CD4-positive, alpha-beta T cell (primary cell): ENCODE measurements at regions of chr6 and their contacts with region 1.

Region 1: DNA sequence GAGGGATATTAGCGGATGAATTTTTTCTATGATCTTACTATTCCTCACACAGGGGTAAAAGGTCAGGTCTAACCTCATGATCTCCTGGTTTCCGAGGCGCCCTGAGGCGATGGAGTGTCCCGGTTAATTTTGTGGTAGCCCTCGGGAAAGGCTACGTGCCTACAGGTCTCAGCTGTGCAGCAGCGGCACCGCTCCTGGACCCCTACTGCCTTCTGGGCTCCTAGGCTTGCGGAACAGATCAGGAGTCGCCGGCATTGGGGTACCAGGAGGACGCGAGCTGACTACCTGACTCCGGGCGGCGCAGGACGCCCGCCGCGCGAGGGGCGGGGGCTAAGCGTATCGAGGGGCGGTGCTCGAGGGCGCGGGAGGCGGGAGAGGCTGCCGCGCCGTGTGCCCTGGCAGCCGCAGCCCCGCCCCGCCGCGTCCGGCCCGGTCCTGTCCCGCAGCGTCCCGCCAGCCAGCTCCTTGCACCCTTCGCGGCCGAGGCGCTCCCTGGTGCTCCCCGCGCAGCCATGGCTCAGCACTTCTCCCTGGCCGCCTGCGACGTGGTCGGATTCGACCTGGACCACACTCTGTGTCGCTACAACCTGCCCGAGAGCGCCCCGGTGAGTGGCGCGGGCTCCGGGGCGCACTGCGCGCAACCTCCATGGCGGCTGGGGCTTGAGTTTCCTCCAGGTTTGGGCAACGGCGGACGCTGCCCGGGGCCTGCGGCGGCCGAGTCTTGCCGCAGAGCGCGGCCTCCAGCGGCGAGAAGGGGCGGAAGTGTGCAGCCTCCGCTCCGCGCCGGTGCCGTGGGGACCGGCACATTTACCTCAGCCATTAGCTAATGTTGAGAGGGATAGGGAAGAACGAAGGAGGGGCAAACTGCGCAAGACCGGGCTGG is at the start of gene NT5DC1:
- DNase-seq: peak; percentile 65 to 92 (median 82)
- ATAC-seq: peak; percentile 92
- H3K4me3 ChIP-seq: peak within 1 kb of the TSS; percentile 67
- H3K4me3 Mint-ChIP-seq: peak within 1 kb of the TSS; percentile 99
- H3K27ac ChIP-seq: peak within 1 kb of the TSS; percentile 69 to 75
- H3K27ac Mint-ChIP-seq: peak within 1 kb of the TSS; percentile 80
- H3K4me1 ChIP-seq: peaks cover 26% of the 10 kb centered on the region
- H3K4me1 Mint-ChIP-seq: peaks cover 58% of the 10 kb centered on the region
- H3K27me3 ChIP-seq: no peaks in the 10 kb centered on the region
- H3K27me3 Mint-ChIP-seq: no peaks in the 10 kb centered on the region
- CTCF ChIP-seq: peak; percentile 52
- total RNA-seq, gene NT5DC1: 24.2 to 27.2 TPM

Region 2: DNA sequence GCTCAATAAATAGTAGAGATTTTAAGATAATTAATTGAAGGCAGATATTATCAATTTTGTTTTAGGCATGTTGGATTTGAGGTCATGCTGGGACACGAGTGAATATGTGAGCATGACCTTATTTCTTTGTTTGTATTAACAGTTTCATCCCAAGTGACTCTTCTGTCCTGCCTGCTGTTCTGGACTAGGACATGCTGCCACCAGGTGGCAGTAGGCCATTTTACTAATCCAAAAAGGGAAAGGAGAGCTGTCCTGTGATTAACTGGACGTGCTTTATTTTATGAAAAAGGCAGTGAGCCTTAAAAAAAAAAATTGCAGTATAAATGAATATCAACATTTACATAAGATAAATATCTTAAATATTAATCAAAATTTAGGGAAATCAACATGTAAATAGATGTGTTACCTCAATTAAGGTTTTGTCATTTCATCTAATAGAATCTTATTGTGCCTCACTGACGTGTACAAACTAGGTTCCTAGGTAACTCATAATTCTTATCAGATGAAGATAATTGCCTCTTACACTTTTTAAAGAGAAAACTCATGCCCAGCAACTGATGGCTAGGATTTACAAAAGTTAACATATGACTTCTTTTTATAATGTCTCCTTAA is 89.8 kb before region 1 on chr6:
- CTCF ChIA-PET with region 1: interaction called, 8 read pairs
- POLR2A ChIA-PET with region 1: no interaction called
- intact Hi-C with region 1: loop called (anchors 1 kb)
- DNase-seq: peak; percentile 5 to 62 (median 29)
- ATAC-seq: no peak
- H3K4me3 ChIP-seq: no peak overlapping the region
- H3K4me3 Mint-ChIP-seq: no peak overlapping the region
- H3K27ac ChIP-seq: no peak overlapping the region
- H3K27ac Mint-ChIP-seq: no peak overlapping the region
- H3K4me1 ChIP-seq: no peaks in the 10 kb centered on the region
- H3K4me1 Mint-ChIP-seq: no peaks in the 10 kb centered on the region
- H3K27me3 ChIP-seq: peaks cover 3 to 9% of the 10 kb centered on the region in 2 experiments
- H3K27me3 Mint-ChIP-seq: peaks cover 7% of the 10 kb centered on the region
- CTCF ChIP-seq: peak; percentile 86

Region 3: DNA sequence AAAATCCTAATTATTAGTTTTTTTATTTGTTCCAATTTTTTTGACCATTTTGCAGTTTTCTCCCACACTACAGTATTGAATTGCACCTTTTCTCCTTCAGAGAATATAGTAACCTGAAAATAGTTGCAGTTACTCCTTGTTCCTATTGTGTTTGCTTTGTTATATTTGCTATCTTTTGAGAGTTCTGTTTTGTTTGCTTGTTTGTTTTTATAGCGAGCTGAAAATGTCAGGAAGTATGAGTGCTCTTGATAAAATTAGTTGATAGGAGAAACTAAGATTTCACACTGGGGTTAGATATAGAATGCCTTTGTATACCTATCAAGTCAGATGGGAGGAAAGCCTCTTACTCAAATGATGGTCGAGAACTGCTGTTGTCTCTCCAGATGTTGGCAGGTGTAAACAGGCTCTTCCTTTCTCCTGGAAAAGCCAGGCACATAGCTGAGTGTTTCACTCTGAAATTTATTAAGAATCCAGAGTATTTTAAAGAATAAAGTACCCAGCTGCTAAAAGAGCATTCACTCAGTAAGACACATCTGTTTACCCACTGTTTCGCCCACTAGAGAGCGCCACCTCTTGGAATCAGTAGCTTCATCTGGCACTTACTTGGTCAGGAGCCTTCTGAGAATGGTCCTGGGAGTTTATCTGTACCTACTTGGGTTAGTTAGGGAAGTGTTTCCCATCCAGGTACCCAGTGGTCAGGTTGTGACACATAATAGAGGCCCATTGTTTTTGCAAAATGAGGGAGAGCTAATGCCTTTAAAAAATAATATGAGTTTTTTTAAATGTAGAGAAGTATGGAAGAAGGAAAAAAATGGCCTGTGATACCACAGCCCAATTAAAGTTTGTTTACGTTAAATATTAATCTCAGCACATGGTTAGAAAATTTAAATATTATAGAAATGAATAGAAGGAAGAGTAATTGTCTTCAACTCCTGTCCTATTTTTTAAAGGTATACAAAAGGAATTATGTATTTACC is 11.2 kb after region 1 on chr6:
- CTCF ChIA-PET with region 1: interaction called, 11 read pairs
- POLR2A ChIA-PET with region 1: interaction called, 12 read pairs
- intact Hi-C with region 1: no loop called
- DNase-seq: peak in 6 of 14 experiments; percentile 6 to 28 (median 22)
- ATAC-seq: no peak
- H3K4me3 ChIP-seq: no peak overlapping the region
- H3K4me3 Mint-ChIP-seq: no peak overlapping the region
- H3K27ac ChIP-seq: no peak overlapping the region
- H3K27ac Mint-ChIP-seq: no peak overlapping the region
- H3K4me1 ChIP-seq: no peaks in the 10 kb centered on the region
- H3K4me1 Mint-ChIP-seq: peaks cover 17% of the 10 kb centered on the region
- H3K27me3 ChIP-seq: no peaks in the 10 kb centered on the region
- H3K27me3 Mint-ChIP-seq: no peaks in the 10 kb centered on the region
- CTCF ChIP-seq: peak; percentile 43

Region 4: GRCh38 chr6:116253505-116254296 is 153.0 kb after region 1 on chr6 and contains the start of gene TSPYL4:
- CTCF ChIA-PET with region 1: no interaction called
- POLR2A ChIA-PET with region 1: interaction called, 11 read pairs
- intact Hi-C with region 1: loop called in 1 of 2 experiments (anchors 2 kb)
- DNase-seq: peak; percentile 80 to 98 (median 88)
- ATAC-seq: peak; percentile 96
- H3K4me3 ChIP-seq: peak within 1 kb of the TSS; percentile 91
- H3K4me3 Mint-ChIP-seq: no peak within 1 kb of the TSS
- H3K27ac ChIP-seq: peak within 1 kb of the TSS; percentile 92 to 94
- H3K27ac Mint-ChIP-seq: no peak within 1 kb of the TSS
- H3K4me1 ChIP-seq: peaks cover 31% of the 10 kb centered on the region
- H3K4me1 Mint-ChIP-seq: peaks cover 6% of the 10 kb centered on the region
- H3K27me3 ChIP-seq: no peaks in the 10 kb centered on the region
- H3K27me3 Mint-ChIP-seq: no peaks in the 10 kb centered on the region
- CTCF ChIP-seq: no peak
- total RNA-seq, gene TSPYL4: 35.9 to 37.7 TPM

Region 5: GRCh38 chr6:116536216-116536621 is 435.6 kb after region 1 on chr6:
- CTCF ChIA-PET with region 1: no interaction called
- POLR2A ChIA-PET with region 1: no interaction called
- intact Hi-C with region 1: no loop called
- DNase-seq: peak in 5 of 14 experiments; percentile 5 to 75 (median 56)
- ATAC-seq: peak; percentile 39
- H3K4me3 ChIP-seq: no peak overlapping the region
- H3K4me3 Mint-ChIP-seq: no peak overlapping the region
- H3K27ac ChIP-seq: no peak overlapping the region
- H3K27ac Mint-ChIP-seq: no peak overlapping the region
- H3K4me1 ChIP-seq: no peaks in the 10 kb centered on the region
- H3K4me1 Mint-ChIP-seq: no peaks in the 10 kb centered on the region
- H3K27me3 ChIP-seq: peaks cover 0 to 4% of the 10 kb centered on the region in 2 experiments
- H3K27me3 Mint-ChIP-seq: peaks cover 38% of the 10 kb centered on the region
- CTCF ChIP-seq: peak; percentile 83

Region 6: DNA sequence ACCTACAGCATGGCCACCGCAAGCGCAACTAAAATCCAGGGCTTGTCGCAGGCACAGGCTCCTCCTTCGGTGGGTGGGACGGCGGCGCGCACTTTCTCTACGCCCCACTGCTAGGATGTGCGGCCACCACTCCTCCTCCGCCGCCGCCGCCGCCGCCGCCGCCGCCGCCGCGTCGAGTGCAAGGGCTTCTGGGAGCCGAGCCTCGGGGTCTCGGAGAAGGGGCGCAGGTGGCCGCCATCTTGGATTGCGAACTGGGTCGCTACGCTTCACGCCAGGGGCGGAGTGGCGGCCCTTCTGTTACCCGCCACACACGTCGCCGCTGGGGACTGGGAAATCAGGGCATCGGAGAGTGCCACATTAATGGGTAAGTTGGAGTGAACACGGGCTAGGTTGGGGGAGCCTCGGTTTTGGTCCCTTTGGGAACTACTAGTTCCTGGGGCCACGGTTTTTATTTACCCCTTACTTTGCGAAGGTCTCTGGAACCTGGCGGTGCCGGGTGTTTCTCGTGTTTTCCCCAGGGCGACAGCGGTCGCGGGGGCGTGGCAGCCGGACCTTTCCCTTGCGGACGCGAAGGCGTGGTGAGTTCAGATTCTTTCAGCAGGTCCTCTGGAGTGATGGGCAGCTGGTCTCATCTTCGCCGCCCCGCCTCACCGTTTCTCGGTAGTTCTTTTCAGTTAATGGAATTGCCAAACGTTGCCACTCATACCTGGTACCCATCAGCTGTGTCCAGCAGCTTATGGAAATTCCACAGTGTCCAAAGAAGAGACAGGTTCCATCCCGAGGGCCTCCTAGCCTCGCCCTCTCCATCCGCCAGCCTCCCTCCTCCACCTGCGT is 580.5 kb after region 1 on chr6 and contains the start of gene KPNA5:
- CTCF ChIA-PET with region 1: no interaction called
- POLR2A ChIA-PET with region 1: interaction called, 7 read pairs
- intact Hi-C with region 1: loop called in 1 of 2 experiments (anchors 10 kb)
- DNase-seq: peak; percentile 83 to 96 (median 90)
- ATAC-seq: peak; percentile 93
- H3K4me3 ChIP-seq: peak within 1 kb of the TSS; percentile 82
- H3K4me3 Mint-ChIP-seq: peak within 1 kb of the TSS; percentile 99
- H3K27ac ChIP-seq: peak within 1 kb of the TSS; percentile 85 to 89
- H3K27ac Mint-ChIP-seq: peak within 1 kb of the TSS; percentile 94
- H3K4me1 ChIP-seq: peaks cover 28% of the 10 kb centered on the region
- H3K4me1 Mint-ChIP-seq: peaks cover 60% of the 10 kb centered on the region
- H3K27me3 ChIP-seq: no peaks in the 10 kb centered on the region
- H3K27me3 Mint-ChIP-seq: no peaks in the 10 kb centered on the region
- CTCF ChIP-seq: no peak
- total RNA-seq, gene KPNA5: 60.0 to 66.0 TPM